Common myeloid progenitor, CD34-positive (primary cell): ENCODE measurements at regions of chr2 and their contacts with region 1.

Region 1: GRCh38 chr2:70984576-70985282 is 6.3 kb downstream of the ANKRD53 start:
- DNase-seq: peak; percentile 68 to 84 (median 84)
- H3K4me3 ChIP-seq: peak overlapping the region in 5 of 7 experiments; percentile 19 to 81 (median 65)
- H3K27ac ChIP-seq: no peak overlapping the region
- H3K4me1 ChIP-seq: peaks cover 0 to 16% (median 7%) of the 10 kb centered on the region in 4 experiments
- H3K27me3 ChIP-seq: no peaks in the 10 kb centered on the region

Region 2: GRCh38 chr2:70994756-70995729 is 10.3 kb after region 1 on chr2 and contains the start of gene TEX261:
- CTCF ChIA-PET with region 1: interaction called, 19 read pairs
- POLR2A ChIA-PET with region 1: no interaction called
- DNase-seq: peak; percentile 90 to 93 (median 92)
- H3K4me3 ChIP-seq: peak within 1 kb of the TSS; percentile 82 to 95 (median 89)
- H3K27ac ChIP-seq: peak within 1 kb of the TSS; percentile 54 to 67
- H3K4me1 ChIP-seq: peaks cover 8 to 31% (median 23%) of the 10 kb centered on the region in 4 experiments
- H3K27me3 ChIP-seq: no peaks in the 10 kb centered on the region

Region 3: DNA sequence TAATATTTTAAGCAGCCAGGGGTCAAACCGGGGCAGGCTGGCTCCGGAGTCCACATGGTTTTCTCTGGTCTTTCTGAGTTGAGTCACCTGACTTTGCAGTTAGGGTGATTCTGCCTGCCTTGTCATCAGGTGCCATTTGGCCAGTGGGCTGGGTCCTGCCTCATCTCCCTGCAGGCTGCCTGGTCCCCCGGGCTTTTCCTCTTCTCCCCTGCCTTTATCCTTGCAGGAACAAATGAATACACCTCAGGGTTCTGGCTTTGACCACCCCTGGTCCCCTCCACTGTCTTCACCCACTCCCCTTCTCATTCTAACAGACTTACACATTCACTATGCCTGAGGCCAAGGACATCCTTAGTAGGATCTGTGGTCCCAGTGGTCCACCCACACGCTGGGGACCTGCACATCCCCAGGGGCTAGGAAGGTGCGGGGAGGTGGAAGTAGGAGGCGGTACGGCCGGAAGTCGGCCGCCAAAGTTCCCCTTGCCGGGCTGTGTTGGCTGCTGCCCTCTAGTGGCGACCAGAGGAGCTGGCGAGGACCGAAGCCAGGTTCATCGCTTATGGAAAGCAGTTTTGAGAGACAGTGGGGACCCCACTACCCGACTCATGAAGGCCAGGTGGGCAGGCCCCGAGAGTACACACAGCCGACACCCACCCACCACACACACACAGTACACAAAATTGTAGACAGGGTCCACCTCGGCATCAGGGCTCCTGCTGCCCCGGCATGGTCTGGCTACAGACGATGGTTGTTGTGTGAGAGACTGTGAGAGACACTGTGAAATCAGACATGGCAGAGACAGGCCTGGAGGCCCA is 16.3 kb after region 1 on chr2:
- CTCF ChIA-PET with region 1: interaction called, 14 read pairs
- POLR2A ChIA-PET with region 1: no interaction called
- DNase-seq: peak; percentile 66 to 81 (median 78)
- H3K4me3 ChIP-seq: peak overlapping the region in 6 of 7 experiments; percentile 44 to 77 (median 51)
- H3K27ac ChIP-seq: no peak overlapping the region
- H3K4me1 ChIP-seq: peaks cover 0 to 12% (median 6%) of the 10 kb centered on the region in 4 experiments
- H3K27me3 ChIP-seq: peaks cover 0 to 4% (median 0%) of the 10 kb centered on the region in 5 experiments